ENCODE measurements at regions of chr17 and their contacts with region 1.

Region 1: DNA sequence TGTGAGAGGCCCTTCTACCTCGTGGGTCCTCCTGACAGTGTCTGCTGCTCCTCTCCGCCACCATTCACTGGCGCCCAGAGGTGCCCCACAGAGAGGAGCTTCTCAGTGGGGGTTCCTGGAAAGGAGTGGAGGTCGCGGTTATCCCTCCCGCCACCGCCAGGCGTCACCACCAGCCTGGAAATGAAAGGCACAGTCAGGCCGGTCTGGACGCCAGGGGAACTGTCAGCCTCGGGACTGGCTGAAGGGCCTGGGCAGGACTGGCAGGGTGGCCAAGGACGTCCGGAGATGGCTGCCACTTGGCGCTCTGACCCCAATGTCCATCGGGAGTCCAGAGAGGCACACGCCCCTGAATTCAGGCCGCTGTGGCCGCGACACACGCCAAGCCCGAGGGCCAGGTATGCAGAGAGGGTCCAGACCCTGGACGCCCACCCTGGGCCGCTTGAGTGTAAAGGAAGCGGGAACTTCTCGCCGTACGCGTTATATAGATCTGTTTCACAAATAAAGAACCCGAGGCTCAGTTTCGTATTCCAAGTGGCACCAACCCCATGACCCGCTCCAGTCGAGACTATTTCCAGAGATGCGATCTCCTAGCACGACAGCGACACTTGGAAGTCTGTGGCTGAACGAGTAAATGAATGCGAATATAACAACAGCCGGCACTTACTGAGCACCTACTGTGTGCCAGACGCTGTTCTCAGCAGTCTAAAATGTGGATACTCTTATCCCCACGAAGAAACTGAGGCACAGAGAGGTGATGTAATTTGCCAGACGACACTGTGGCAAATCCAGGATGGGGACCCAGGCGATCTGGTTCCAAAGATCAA is 7.6 kb upstream of the NXPH3 start:
- DNase-seq: peak; percentile 77

Region 2: GRCh38 chr17:49677933-49678847 is 110.1 kb after region 1 on chr17 and contains the start of gene SPOP:
- CTCF ChIA-PET with region 1: interaction called, 11 read pairs
- POLR2A ChIA-PET with region 1: interaction called, 6 read pairs
- DNase-seq: peak; percentile 98

Region 3: DNA sequence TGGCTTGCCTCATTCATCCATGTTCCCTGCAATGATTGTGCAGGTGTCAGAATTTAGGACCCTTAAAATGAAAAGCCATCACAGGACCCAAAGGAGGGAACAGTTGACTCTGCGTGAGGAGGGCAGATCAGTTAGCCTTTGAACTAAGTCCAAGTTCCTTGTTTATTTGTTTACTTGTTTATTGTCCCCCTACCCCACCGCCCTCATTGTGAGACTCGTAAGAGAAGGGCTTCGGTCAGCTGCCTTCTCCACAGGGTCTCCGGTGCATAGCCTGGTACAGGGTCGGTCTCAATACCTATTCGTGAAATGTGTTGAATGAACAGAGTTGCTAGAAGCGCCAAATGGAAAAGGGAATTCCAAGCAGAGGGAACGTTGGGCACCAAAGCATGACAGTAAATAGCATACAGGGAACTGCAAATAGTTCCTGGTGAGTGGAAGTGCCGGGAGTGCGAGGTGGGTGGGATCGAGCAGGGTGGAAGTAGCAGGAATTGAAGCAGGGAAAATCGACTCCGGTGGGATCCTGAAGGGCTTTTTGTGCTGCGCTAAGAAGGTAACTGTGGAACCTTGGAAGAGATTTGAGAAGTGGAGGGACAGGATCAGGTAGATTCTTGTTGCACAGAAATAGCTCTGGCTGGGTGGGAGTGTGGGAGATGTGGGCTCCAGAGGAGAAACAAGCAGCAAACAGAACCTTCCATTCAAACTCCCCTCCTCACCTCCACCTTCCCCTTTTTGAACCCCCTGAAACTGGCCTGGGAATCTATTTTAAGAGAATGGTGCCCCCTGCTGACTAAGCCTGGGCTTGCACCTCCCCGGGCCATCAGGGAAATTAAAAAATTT is 127.0 kb after region 1 on chr17:
- CTCF ChIA-PET with region 1: interaction called, 35 read pairs
- POLR2A ChIA-PET with region 1: interaction called, 10 read pairs
- DNase-seq: peak; percentile 53